ENCODE measurements at regions of chr2 and their contacts with region 1.

Region 1: DNA sequence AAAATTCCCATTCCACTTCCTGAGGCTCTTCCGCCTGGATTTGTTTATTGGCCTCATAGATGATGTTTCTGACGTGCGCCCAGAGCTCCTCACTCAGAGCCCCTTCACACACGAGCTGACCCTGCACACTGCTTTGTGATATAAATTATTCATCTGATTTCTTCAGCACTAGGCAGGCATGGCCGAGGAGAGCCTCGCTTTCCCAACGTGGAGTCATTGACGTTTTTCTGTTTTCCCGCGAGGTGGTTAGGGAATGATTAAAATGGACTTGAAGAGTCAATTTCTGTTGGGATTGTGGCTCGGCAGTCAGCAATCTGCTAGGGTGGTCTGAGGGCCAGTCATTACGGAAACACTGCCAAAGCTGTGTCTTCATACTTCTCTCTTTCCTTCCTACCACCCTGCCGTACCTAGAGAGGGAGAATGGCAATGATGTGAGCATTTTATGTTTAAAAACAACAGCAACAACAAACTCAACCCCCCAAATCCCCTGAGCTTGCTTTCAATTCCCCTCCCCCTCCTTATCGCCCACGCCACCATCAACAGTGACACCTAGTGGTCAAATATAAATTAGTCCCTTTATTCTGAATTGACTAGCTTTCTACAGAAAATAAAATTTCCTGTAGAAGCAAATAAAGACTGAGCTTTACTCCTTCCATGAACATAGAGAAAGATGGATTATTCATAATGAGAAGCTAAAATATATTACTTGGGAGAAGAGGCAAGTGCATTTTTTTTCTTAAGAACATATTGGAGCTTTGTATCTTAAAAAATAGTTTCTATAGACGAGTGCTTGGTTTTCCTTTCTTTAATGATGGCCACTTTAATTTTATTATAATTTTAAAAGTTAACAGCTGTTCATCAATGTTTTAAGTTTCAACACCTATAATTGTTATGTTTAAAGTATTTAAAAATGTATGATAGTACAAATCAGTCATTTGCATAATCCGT is 285.1 kb downstream of the MTX2 start:
- DNase-seq: peak; percentile 38 to 52
- H3K4me3 ChIP-seq: peak overlapping the region; percentile 37 to 51
- H3K27ac ChIP-seq: peak overlapping the region; percentile 90 to 94
- H3K4me1 ChIP-seq: peaks cover 0 to 10% of the 10 kb centered on the region in 2 donors
- H3K27me3 ChIP-seq: no peaks in the 10 kb centered on the region
- CTCF ChIP-seq: peak; percentile 74 to 91 (median 84)
- POLR2A ChIP-seq: peak in 1 of 2 donors; percentile 9

Region 2: GRCh38 chr2:176140513-176141317 is 413.7 kb before region 1 on chr2:
- intact Hi-C with region 1: loop called (anchors 5 kb)
- DNase-seq: peak; percentile 81 to 88
- H3K4me3 ChIP-seq: peak overlapping the region; percentile 72 to 85
- H3K27ac ChIP-seq: peak overlapping the region; percentile 98 to 99
- H3K4me1 ChIP-seq: peaks cover 8 to 10% of the 10 kb centered on the region in 2 donors
- H3K27me3 ChIP-seq: no peaks in the 10 kb centered on the region
- CTCF ChIP-seq: peak; percentile 94 to 99 (median 96)
- POLR2A ChIP-seq: peak in 1 of 2 donors; percentile 43

Region 3: DNA sequence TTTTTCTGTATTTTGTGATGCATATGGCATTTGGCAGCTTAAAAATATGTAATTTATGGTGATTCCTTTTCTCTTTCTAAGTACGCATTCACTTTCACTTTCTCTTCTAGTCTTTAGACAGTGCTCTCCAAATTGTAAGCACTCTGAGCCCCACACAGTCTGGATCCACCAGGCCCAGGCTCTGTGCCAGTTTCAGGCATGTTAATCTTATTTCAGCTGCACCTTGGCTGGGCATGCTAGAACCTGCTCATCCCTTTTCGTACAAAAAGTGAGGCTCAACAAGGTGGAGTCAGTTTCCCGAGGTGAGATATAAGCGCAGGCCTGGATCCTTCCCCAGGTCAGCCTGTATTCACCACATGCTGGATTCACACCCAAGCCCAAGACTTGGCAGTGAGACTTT is 81.2 kb before region 1 on chr2:
- intact Hi-C with region 1: loop called (anchors 10 kb)
- DNase-seq: peak; percentile 63 to 66
- H3K4me3 ChIP-seq: peak overlapping the region; percentile 2 to 22
- H3K27ac ChIP-seq: peak overlapping the region; percentile 50 to 69
- H3K4me1 ChIP-seq: no peaks in the 10 kb centered on the region
- H3K27me3 ChIP-seq: no peaks in the 10 kb centered on the region
- CTCF ChIP-seq: no peak
- POLR2A ChIP-seq: no peak

Region 4: DNA sequence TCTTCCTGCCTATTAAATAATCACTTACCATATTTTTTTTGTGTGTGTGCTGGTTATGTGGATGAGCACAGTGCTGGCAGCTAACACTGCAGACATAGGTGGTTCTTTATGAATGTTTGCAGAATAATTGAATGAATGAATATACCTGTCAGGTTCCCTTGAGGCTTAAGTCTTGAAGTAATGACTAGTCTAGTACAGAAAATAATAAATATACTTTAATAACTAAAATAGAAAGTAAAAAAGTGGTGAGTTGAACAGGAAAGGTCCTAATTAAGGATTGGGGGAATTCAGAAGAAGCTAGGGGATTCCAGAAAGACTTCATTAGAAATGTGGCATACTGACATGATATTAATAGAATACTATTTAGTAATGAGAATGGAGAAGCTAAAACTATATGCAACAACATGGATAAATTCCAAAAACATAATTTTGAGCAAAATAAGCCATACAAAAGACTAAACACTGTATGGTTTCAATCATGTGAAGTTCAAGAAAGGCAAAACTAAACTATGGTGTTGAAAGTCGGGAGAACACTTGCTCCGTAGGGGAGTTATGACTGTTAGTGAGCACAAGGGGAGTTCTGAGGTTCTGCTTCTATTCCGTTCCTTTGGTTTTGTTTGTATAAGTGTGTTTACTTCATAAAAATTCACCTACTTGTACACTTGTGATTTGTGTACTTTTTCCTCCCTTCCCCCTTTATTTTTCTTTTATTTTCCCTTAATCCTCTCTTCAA is 179.5 kb after region 1 on chr2:
- intact Hi-C with region 1: no loop called
- DNase-seq: no peak
- H3K4me3 ChIP-seq: no peak overlapping the region
- H3K27ac ChIP-seq: no peak overlapping the region
- H3K4me1 ChIP-seq: no peaks in the 10 kb centered on the region
- H3K27me3 ChIP-seq: no peaks in the 10 kb centered on the region
- CTCF ChIP-seq: no peak
- POLR2A ChIP-seq: no peak

Measured in uterus (tissue), 4 donors.